ENCODE measurements at regions of chr1 and their contacts with region 1.

Region 1: GRCh38 chr1:202571347-202572339 is 138.6 kb downstream of the SYT2 start:
- DNase-seq: no peak
- H3K4me3 ChIP-seq: no peak overlapping the region
- H3K27ac ChIP-seq: no peak overlapping the region
- H3K4me1 ChIP-seq: peaks cover 12 to 18% (median 14%) of the 10 kb centered on the region in 4 experiments; a peak in 6 of 7 replicates
- H3K27me3 ChIP-seq: no peaks in the 10 kb centered on the region
- CTCF ChIP-seq: peak; percentile 57 to 84 (median 78)
- EP300 ChIP-seq: no peak
- POLR2A ChIP-seq: no peak
- RAD21 ChIP-seq: peak; percentile 87 to 92

Region 2: GRCh38 chr1:202505356-202505755 is 66.3 kb before region 1 on chr1:
- CTCF ChIA-PET with region 1: interaction called, 78 read pairs
- POLR2A ChIA-PET with region 1: interaction called, 4 read pairs
- DNase-seq: no peak
- H3K4me3 ChIP-seq: no peak overlapping the region
- H3K27ac ChIP-seq: no peak overlapping the region
- H3K4me1 ChIP-seq: peaks cover 0 to 3% (median 0%) of the 10 kb centered on the region in 4 experiments; a peak in 2 of 7 replicates
- H3K27me3 ChIP-seq: no peaks in the 10 kb centered on the region
- CTCF ChIP-seq: no peak
- EP300 ChIP-seq: no peak
- POLR2A ChIP-seq: no peak
- RAD21 ChIP-seq: no peak

Region 3: GRCh38 chr1:202553560-202554038 is 18.0 kb before region 1 on chr1:
- CTCF ChIA-PET with region 1: interaction called, 22 read pairs
- POLR2A ChIA-PET with region 1: no interaction called
- DNase-seq: no peak
- H3K4me3 ChIP-seq: no peak overlapping the region
- H3K27ac ChIP-seq: no peak overlapping the region
- H3K4me1 ChIP-seq: peaks cover 0 to 3% (median 0%) of the 10 kb centered on the region in 4 experiments; a peak in 1 of 7 replicates
- H3K27me3 ChIP-seq: no peaks in the 10 kb centered on the region
- CTCF ChIP-seq: no peak
- EP300 ChIP-seq: no peak
- POLR2A ChIP-seq: no peak
- RAD21 ChIP-seq: no peak

Region 4: GRCh38 chr1:202671122-202671797 is 99.6 kb after region 1 on chr1:
- CTCF ChIA-PET with region 1: no interaction called
- POLR2A ChIA-PET with region 1: no interaction called
- DNase-seq: no peak
- H3K4me3 ChIP-seq: no peak overlapping the region
- H3K27ac ChIP-seq: no peak overlapping the region
- H3K4me1 ChIP-seq: no peaks in the 10 kb centered on the region; a peak in 1 of 7 replicates
- H3K27me3 ChIP-seq: no peaks in the 10 kb centered on the region
- CTCF ChIP-seq: no peak
- EP300 ChIP-seq: no peak
- POLR2A ChIP-seq: no peak
- RAD21 ChIP-seq: no peak

Region 5: GRCh38 chr1:202710070-202711045 is 138.7 kb after region 1 on chr1 and contains the start of gene SYT2:
- CTCF ChIA-PET with region 1: interaction called, 10 read pairs
- POLR2A ChIA-PET with region 1: no interaction called
- DNase-seq: peak in 1 of 2 experiments; percentile 81
- H3K4me3 ChIP-seq: peak within 1 kb of the TSS; percentile 42 to 86 (median 66)
- H3K27ac ChIP-seq: no peak within 1 kb of the TSS
- H3K4me1 ChIP-seq: peaks cover 10 to 30% (median 21%) of the 10 kb centered on the region in 4 experiments
- H3K27me3 ChIP-seq: peaks cover 0 to 30% (median 19%) of the 10 kb centered on the region in 4 experiments; a peak in 5 of 7 replicates
- CTCF ChIP-seq: no peak
- EP300 ChIP-seq: no peak
- POLR2A ChIP-seq: no peak
- RAD21 ChIP-seq: no peak
- total RNA-seq, gene SYT2: 10.7 and 11.0 TPM in 2 replicates

Measured in H1 (cell line).